Posterior cingulate gyrus (tissue), 11 donors: ENCODE measurements at regions of chr9 and their contacts with region 1.

Region 1: DNA sequence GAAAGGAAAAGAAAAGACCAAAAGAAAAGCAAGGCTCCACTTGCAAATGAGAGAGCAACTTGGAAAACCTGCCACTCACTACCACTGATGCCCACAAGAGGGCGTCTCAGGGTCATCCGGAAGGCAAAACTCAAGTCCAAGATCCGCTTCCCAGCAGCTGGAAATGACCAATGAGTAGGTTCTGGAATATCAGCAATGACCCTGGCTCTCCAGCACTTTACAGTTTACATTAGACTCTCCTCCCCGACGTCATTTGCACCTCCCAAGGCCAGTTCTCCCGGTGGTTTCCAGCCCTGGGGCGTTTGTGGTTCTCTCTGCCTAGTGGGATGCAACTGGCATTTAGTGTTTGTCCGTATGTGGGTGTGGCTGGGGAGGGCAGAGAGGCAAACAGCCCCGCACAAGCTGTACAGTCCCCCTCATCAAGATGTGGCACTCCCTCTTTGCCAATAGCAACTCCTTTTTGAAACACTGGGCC is 193.8 kb upstream of the ZNF618 start:
- DNase-seq: peak; percentile 59 to 95 (median 82)

Region 2: DNA sequence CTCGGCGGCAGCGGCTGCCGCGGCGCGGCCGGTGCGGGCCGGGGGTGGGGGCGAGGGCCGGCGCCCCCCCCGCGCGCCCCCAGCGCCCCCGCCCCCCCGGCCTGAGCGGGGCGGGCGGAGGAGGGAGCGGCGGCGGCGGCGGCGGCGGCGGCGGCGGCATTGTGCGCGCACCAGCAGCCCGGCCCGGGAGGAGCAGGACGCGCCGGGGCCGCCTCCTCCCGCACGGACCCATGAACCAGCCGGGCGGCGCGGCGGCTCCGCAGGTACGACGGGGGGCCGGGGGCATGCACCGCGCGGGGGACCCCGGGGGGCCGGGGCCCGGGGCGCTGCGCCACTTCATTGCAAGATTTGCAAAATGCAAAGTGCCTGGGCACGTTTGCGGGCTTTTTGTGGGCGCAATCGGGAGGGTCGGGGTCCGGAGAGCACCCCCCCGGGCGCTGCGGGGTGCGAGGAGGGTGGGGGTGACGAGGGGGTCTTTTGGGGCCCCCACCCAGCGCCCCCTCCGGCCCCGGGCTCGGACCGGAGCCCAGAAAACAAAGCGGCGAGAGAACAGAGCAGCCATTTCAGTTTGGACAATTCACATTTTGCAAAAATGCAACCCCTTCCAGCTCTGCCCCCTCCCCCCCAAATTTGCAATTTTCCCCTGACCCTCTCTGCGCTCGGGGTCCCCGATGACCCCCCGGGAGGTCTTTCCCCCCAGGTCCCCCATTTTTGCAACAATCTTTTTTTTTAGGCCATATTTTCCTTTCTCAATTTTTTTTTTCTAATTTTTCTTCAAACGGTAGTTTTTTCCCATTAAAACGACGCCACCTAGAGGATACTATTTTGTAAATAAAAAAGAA is 194.0 kb after region 1 on chr9 and contains the start of gene ZNF618:
- intact Hi-C with region 1: loop called (anchors 10 kb)
- DNase-seq: peak in 4 of 10 donors; percentile 7 to 85 (median 65)

Region 3: GRCh38 chr9:114033397-114034103 is 351.2 kb after region 1 on chr9:
- intact Hi-C with region 1: loop called (anchors 5 kb)
- DNase-seq: peak in 5 of 10 donors; percentile 30 to 90 (median 59)

Region 4: DNA sequence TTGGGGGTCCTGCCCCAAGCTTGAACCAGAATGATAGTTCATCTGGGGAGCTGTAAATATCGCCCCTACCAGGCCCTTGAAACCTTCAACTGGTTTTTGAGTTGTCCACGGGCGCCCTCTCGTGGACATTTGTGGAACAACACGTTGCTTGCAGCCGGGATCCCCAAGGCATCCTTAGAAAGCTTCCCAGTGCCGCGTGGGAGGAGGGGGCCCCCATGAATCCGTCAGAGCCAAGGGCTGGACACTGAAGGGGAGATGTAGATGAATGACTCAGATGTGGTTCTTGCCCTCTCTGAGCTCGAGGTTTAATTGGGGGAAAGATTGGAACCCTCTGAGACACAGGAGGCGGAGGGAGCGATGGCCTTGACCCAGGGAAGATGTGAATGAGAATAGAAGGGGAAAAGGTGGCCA is 608.7 kb after region 1 on chr9:
- intact Hi-C with region 1: no loop called
- DNase-seq: peak; percentile 44 to 96 (median 78)